ENCODE measurements at regions of chr1 and their contacts with region 1.

Region 1: GRCh38 chr1:212699104-212699624 is 476 bp downstream of the BATF3 start:
- DNase-seq: peak; percentile 79
- H3K4me3 Mint-ChIP-seq: peak overlapping the region; percentile 90
- H3K27ac Mint-ChIP-seq: peak overlapping the region; percentile 95
- H3K4me1 Mint-ChIP-seq: peaks cover 71% of the 10 kb centered on the region
- H3K27me3 Mint-ChIP-seq: peaks cover 2% of the 10 kb centered on the region

Region 2: GRCh38 chr1:212665241-212666115 is 33.7 kb before region 1 on chr1:
- CTCF ChIA-PET with region 1: interaction called, 32 read pairs
- POLR2A ChIA-PET with region 1: interaction called, 4 read pairs
- intact Hi-C with region 1: loop called (anchors 2 kb)
- DNase-seq: peak; percentile 88
- H3K4me3 Mint-ChIP-seq: peak overlapping the region; percentile 73
- H3K27ac Mint-ChIP-seq: peak overlapping the region; percentile 57
- H3K4me1 Mint-ChIP-seq: peaks cover 19% of the 10 kb centered on the region
- H3K27me3 Mint-ChIP-seq: peaks cover 3% of the 10 kb centered on the region

Region 3: GRCh38 chr1:212712451-212713303 is 13.5 kb after region 1 on chr1:
- CTCF ChIA-PET with region 1: interaction called, 5 read pairs
- POLR2A ChIA-PET with region 1: interaction called, 15 read pairs
- intact Hi-C with region 1: loop called (anchors 1 kb)
- DNase-seq: peak; percentile 61
- H3K4me3 Mint-ChIP-seq: no peak overlapping the region
- H3K27ac Mint-ChIP-seq: peak overlapping the region; percentile 95
- H3K4me1 Mint-ChIP-seq: peaks cover 47% of the 10 kb centered on the region
- H3K27me3 Mint-ChIP-seq: no peaks in the 10 kb centered on the region

Region 4: DNA sequence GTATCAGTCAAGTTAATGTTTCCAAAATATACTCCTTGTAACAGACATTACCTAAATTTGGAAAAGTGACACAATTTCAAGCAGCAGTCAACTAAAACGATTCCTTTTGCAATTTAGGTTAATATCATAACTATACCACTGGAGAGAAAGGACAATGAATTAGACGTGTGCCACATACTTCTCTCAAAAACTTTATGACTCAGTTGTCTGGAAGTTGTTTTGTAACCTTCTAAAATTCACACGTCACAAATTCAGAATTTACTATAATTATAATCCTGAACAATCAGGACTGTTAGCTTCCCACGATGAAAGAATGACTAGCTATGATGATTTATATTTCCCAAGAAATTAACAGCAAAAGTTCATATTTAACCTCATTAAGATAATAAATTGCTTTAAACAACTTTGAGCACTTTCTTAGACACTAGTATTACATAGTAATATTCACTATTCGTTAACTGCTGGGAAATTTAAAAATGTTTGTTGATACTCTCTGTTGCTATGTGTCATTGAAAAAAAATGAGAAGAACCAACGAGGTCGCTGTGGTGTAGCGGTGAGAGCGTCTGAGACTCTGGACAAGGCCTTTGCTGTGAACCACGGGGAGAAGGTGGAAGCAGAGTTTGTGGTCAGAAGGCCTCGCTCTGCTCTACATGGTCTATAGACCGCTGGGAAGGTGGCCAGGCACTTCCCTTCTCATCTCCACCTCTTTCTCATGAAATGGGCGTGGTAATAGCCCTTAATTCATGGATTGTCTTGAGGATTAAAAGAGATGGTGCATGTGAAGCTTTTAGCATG is 28.4 kb after region 1 on chr1:
- CTCF ChIA-PET with region 1: interaction called, 22 read pairs
- POLR2A ChIA-PET with region 1: interaction called, 31 read pairs
- intact Hi-C with region 1: no loop called
- DNase-seq: peak; percentile 66
- H3K4me3 Mint-ChIP-seq: peak overlapping the region; percentile 13
- H3K27ac Mint-ChIP-seq: peak overlapping the region; percentile 92
- H3K4me1 Mint-ChIP-seq: peaks cover 66% of the 10 kb centered on the region
- H3K27me3 Mint-ChIP-seq: no peaks in the 10 kb centered on the region

Region 5: DNA sequence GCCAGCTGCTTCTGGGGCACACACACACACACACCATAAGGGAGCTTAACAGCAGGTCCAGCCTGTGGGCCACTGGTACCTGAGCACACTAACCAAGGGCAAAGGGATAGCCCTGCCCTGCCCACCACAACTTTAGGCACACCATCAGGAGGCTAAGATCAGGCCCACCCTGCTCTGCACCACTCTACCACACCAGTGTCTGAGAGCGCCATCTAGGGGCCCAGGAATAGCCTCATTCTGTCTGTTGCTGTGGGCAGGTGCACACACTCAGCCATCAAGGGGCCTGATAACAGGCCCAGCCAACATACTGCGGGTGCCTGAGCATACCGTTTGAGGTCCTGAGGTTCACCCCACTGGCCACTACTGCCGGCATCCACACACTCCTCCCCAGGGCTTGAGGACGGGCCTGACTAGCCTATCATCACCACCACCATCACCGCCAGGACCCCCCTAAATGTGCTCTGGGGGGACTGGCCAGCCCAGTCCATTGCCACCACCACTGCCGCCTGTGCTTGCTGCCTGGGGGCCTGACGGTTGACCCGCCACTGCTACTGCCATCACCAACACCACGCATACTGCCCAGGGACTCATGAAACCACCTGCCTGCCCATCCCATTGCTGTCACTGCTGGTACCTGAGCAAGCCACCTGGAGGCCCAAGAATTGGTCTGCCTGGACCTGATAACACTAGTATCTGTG is 61.1 kb after region 1 on chr1:
- CTCF ChIA-PET with region 1: interaction called, 3 read pairs
- POLR2A ChIA-PET with region 1: interaction called, 3 read pairs
- intact Hi-C with region 1: loop called (anchors 1 kb)
- DNase-seq: peak; percentile 77
- H3K4me3 Mint-ChIP-seq: no peak overlapping the region
- H3K27ac Mint-ChIP-seq: no peak overlapping the region
- H3K4me1 Mint-ChIP-seq: peaks cover 28% of the 10 kb centered on the region
- H3K27me3 Mint-ChIP-seq: no peaks in the 10 kb centered on the region

Region 6: DNA sequence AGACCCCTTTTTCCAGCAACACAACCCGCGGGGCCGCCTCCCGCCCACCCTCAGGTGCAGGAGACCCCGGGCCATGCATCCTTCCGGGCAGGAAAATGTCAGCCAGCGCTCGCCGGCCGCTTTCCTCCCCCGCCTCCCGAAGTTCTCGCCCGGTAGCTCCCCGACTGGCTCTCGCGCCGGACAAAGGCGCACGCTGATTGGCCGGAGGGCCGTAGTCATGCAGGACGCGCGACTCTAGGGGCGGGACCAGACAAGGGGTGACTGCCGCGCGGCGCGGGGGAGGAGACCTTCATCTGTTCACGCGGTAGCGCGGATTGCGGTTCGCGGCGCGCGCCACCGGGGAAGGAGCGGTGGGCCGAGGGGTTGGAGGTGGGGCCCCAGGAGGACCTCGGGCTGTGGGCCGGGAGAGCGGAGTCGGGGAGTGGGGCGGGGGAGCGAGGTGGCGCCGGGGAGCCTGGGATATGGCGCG is 158.9 kb after region 1 on chr1 and contains the start of gene FLVCR1:
- CTCF ChIA-PET with region 1: no interaction called
- POLR2A ChIA-PET with region 1: no interaction called
- intact Hi-C with region 1: loop called (anchors 5 kb)
- DNase-seq: peak; percentile 98
- H3K4me3 Mint-ChIP-seq: peak within 1 kb of the TSS; percentile 96
- H3K27ac Mint-ChIP-seq: peak within 1 kb of the TSS; percentile 93
- H3K4me1 Mint-ChIP-seq: peaks cover 20% of the 10 kb centered on the region
- H3K27me3 Mint-ChIP-seq: no peaks in the 10 kb centered on the region
- total RNA-seq, gene FLVCR1: 12.4 to 12.6 TPM